ENCODE measurements at regions of chr1 and their contacts with region 1.

Region 1: DNA sequence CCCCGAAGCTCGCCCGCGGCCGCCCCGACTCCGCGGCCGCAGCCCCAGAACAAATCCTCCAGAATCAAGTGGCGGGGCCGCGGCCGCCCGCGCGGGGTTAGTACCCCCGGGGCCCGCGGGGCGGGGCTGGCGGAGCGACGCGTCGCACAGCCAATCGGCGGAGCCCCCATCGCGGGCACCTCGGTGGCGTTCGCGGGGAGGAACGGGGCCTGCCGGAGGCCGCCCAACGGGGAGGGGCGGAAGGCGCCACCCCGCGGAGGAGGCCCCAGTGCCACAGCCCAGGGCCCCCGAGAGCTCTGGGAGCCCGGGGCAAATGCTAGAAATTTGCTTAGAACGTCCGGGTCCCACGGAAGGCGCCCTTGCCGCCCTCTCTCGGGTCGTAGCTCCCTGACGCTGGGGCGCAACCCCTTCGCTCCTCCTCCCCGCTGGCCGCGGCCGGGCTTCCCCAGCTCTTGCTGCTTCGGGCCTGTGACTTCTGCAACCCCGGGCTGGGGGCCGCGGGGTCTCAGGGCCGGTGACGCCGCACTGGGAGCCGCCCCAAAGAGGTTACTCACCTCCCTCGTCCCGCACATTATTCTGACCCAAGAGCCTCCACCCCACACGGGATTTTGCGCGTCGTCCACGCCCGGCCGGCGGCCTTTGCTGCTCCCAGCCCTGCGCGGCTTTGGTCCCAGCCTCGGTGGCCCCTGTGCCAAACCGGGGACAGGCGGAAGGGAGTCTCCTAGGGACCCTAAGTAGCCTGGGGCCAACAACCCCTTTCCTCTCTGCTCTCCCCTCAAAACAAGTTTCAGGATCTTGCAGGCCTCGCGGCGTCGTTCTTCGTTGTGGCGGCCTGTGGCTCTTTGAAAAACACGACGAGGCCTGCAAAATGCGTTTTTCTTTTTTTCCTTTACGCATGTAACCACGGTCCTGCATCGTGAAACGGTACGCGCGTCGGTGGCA is at the start of gene RUNX3:
- DNase-seq: peak; percentile 86 to 96 (median 94)
- ATAC-seq: peak; percentile 82 to 83
- H3K4me3 Mint-ChIP-seq: peak within 1 kb of the TSS; percentile 89 to 99 (median 98)
- H3K27ac Mint-ChIP-seq: peak within 1 kb of the TSS; percentile 88 to 100 (median 98)
- H3K4me1 Mint-ChIP-seq: peaks cover 29 to 69% (median 64%) of the 10 kb centered on the region in 4 donors
- H3K27me3 Mint-ChIP-seq: no peaks in the 10 kb centered on the region
- polyA plus RNA-seq, gene RUNX3: 22.0 to 64.0 (median 54.0) TPM

Region 2: GRCh38 chr1:24727501-24728216 is 202.8 kb before region 1 on chr1:
- POLR2A ChIA-PET with region 1: no interaction called
- DNase-seq: no peak
- ATAC-seq: peak in 1 of 2 donors; percentile 20
- H3K4me3 Mint-ChIP-seq: peak overlapping the region in 1 of 10 donors; percentile 24
- H3K27ac Mint-ChIP-seq: peak overlapping the region in 1 of 10 donors; percentile 5
- H3K4me1 Mint-ChIP-seq: peaks cover 0 to 25% (median 5%) of the 10 kb centered on the region in 4 donors
- H3K27me3 Mint-ChIP-seq: peaks cover 0 to 5% (median 2%) of the 10 kb centered on the region in 5 donors

Region 3: DNA sequence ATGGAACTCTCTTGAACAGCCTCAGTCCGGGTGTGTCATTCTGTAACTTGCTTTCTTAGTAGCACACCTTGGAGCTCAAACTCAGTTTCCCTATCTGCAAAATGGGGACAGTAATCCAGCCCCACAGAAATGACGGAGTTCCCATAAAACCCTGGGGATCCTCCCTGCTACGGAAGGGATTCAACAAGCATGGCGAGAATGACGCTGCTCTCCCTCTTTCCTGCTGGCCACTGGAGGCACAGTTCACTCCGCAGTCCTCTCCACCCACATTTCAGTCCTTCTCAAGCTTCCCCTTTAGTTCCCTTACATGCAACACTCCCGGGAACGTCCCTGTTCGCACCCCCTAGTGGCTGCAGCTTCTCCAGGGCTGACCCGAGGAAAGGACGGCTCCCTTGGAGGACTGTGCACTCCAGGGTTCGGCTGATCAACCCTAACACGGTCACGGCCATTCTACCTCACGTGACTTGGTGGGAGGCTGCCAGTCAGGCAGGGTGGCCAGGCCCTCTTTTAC is 21.0 kb before region 1 on chr1:
- POLR2A ChIA-PET with region 1: interaction called, 290 read pairs
- DNase-seq: no peak
- ATAC-seq: no peak
- H3K4me3 Mint-ChIP-seq: peak overlapping the region in 8 of 10 donors; percentile 16 to 78 (median 44)
- H3K27ac Mint-ChIP-seq: peak overlapping the region; percentile 96 to 100 (median 99)
- H3K4me1 Mint-ChIP-seq: peaks cover 28 to 81% (median 69%) of the 10 kb centered on the region in 4 donors
- H3K27me3 Mint-ChIP-seq: no peaks in the 10 kb centered on the region

Region 4: DNA sequence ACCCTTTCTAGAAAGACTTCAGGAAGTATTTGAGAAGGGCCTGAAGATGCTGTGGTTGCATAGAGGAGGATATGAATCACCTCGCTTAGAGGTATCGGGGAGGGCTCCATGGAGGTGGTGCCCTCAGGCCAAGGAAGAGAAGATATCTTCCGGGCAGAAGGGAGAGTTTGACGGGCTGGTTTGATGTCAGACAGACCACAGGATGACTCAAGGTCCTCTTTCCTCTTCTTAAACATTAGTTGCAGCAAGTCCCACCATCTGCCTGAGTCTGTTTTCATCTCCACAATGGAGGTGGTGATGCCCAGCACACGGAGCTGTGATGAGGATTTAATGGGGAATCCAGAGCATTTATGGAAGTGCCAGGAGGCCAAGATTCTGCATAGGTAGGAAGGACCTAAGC is 24.7 kb after region 1 on chr1:
- POLR2A ChIA-PET with region 1: interaction called, 95 read pairs
- DNase-seq: peak in 5 of 10 donors; percentile 21 to 76 (median 49)
- ATAC-seq: peak; percentile 73 to 75
- H3K4me3 Mint-ChIP-seq: peak overlapping the region; percentile 31 to 88 (median 75)
- H3K27ac Mint-ChIP-seq: peak overlapping the region; percentile 51 to 98 (median 89)
- H3K4me1 Mint-ChIP-seq: peaks cover 43 to 96% (median 90%) of the 10 kb centered on the region in 4 donors
- H3K27me3 Mint-ChIP-seq: no peaks in the 10 kb centered on the region

Region 5: DNA sequence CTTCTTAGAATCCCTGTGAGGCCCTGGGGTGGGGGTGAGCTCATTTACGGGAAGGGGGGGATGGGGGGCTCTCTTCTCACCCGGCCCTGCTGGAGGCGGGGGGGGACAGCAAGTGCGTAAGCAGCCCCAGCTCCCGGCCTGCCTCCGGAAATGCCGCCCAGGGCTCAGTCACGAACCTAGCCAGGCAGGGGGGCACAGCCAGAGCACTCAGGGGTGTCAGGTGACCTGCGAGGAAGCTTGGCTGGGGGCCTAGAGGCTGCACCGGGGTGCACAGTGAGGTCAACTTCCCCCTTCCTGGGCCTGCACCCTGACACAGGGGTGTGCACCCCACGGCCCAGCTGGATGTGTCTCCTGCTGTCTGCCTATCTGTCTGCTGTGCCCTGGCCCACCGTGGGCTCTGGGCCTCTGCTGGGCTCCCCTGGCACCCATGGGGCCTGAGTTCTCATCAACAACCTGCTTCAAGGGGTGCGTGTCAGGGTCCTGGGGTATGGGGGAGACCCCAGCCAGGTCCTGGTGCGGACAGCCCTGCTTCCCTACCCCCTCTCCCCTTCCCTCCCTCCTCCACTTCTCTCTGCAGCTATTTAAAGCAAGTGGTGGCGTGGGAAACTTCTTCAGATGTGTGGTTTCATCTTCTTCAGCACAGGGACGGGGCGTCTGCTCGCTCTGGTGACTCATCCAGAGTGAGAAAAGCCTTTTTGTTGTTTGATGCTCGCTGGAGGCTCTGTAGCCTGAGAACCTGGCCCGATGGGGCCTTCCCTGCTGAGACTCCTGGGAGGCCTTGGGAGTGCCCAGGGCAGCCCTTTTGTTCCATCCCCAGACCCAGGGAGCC is 92.1 kb after region 1 on chr1:
- POLR2A ChIA-PET with region 1: interaction called, 14 read pairs
- DNase-seq: peak; percentile 86 to 99 (median 96)
- ATAC-seq: peak; percentile 79 to 90
- H3K4me3 Mint-ChIP-seq: peak overlapping the region; percentile 64 to 88 (median 80)
- H3K27ac Mint-ChIP-seq: peak overlapping the region; percentile 95 to 99 (median 97)
- H3K4me1 Mint-ChIP-seq: peaks cover 41 to 93% (median 88%) of the 10 kb centered on the region in 4 donors
- H3K27me3 Mint-ChIP-seq: no peaks in the 10 kb centered on the region

Region 6: DNA sequence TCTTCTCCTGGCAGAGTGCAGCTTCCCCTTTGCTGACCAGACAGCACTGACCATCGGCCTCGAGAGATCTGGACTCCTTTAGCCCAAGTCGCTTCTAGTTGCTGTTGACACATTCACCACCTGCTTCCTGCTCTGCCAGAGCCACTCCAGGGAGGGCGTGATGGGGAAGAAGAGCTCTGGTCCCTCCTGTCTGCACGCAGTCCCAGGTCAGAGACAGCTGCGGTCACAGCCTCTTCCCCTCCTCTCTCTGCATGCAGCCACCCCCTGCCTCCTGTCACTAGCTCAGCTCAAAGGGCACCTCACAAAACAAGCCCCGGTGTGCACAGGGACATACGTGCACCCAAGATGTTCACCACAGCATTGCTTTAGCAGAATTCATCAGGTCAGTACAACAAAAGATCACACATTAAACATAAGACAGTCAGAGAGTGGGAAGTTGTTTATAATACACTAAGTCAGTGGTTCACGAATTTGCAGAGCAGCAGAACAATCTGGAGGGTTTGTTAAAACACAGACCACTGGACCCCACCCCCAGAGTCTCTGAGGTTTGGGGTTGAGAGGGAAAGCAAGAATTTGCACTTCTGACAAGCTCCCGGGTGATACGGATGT is 169.0 kb after region 1 on chr1:
- POLR2A ChIA-PET with region 1: interaction called, 26 read pairs
- DNase-seq: peak in 6 of 10 donors; percentile 33 to 68 (median 47)
- ATAC-seq: peak; percentile 54 to 70
- H3K4me3 Mint-ChIP-seq: peak overlapping the region; percentile 65 to 89 (median 84)
- H3K27ac Mint-ChIP-seq: peak overlapping the region; percentile 46 to 94 (median 88)
- H3K4me1 Mint-ChIP-seq: peaks cover 51 to 82% (median 79%) of the 10 kb centered on the region in 4 donors
- H3K27me3 Mint-ChIP-seq: peaks cover 0 to 3% (median 0%) of the 10 kb centered on the region in 5 donors

Region 7: DNA sequence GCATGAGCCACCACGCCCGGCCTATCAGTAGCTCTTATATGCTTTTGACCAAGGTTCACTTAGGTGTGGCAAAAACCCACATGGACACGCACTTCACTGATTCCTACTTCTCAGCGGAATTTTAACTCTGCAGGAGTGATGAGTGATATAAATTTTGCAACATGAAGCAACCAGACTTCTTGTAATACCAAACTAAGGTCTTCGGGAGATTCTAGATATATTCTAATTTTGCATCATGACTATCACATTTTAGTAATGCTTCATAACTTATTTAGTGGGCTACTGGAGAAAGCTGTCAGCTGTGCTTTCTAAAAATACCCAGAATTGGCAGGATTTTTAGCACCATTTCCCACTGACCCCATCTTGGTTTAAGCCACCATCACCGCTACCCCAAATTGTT is 462.4 kb after region 1 on chr1:
- POLR2A ChIA-PET with region 1: no interaction called
- DNase-seq: no peak
- ATAC-seq: no peak
- H3K4me3 Mint-ChIP-seq: no peak overlapping the region
- H3K27ac Mint-ChIP-seq: no peak overlapping the region
- H3K4me1 Mint-ChIP-seq: no peaks in the 10 kb centered on the region
- H3K27me3 Mint-ChIP-seq: peaks cover 0 to 3% (median 2%) of the 10 kb centered on the region in 5 donors

Measured in naive thymus-derived CD8-positive, alpha-beta T cell (primary cell).